ENCODE measurements at regions of chr13 and their contacts with region 1.

Region 1: DNA sequence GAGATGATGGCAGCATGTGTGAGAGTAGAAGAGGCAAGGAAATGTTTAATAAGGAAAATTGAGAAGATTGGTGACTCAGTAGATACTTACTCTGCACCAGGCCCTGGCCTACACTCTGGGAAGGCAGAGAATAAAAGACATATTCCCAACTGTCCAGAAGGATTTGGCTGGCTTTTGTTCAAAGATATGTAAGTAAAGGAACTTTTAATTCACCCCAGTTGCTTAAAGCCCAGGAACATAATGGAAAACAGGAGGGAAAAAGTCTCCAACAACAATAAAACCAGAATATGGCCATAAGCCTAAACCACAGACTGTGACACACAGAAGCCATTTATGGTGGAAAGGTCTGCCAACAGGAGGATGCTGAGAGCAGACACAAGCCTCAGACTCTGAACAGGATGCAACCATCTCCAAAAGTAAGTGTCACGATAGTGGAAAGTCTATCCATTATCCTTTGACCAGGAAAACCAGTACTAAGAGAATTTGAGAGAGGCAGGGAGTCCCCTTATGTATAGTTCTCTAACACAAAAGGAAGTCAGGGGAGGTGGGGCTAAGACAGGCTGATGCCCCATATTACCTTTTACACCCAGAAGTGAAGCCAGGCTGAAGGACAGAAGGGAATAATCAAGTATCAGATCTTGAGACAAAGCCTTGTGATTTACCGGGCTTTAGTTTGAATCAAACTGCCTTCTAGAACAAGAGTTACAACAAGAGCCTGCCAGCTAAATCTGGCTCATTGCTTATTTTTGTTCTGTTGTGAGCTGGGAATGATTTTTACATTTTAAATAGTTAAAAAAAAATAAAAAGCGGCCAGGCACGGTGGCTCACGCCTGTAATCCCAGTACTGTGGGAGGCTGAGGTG is 169.5 kb upstream of the STARD13 start:
- DNase-seq: peak; percentile 65
- H3K4me3 ChIP-seq: no peak overlapping the region
- CTCF ChIP-seq: no peak

Region 2: DNA sequence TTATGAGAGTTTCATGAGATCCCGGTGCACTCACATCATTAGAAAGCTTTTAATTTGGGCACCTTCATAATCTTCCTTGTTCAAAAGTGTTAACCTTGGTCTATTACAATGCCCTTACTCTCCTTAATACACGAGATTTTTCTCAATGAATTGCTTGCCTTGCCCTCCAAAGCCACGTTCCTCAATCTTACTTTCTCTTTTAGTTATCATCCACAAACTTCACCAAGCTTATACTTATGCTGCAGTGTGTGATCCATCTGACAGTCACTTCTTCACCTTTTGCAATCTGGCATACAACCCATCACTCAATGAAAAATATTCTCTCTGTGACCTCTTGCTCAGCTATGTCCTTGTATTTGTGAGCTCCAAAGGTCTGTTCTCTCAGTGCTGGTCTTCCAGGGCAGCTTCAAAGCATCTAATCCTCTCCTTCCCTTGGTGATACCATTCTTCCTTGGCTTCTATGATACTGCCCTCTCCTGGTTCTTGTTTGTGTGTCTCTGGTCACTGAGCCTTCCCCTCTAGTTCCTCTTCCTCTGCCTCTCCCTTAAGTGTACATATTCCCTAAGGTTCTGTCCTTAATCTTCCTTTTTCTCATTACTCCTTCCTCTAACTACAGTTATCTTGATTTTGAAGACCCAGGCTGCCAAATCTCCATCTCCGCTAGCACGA is 32.6 kb after region 1 on chr13:
- in situ Hi-C with region 1: loop called (anchors 5 kb)
- DNase-seq: no peak
- H3K4me3 ChIP-seq: no peak overlapping the region
- CTCF ChIP-seq: no peak

Region 3: GRCh38 chr13:33690354-33690753 is 235.3 kb after region 1 on chr13:
- in situ Hi-C with region 1: no loop called
- DNase-seq: no peak
- H3K4me3 ChIP-seq: no peak overlapping the region
- CTCF ChIP-seq: no peak

Region 4: GRCh38 chr13:33707449-33707848 is 252.4 kb after region 1 on chr13:
- in situ Hi-C with region 1: no loop called
- DNase-seq: no peak
- H3K4me3 ChIP-seq: no peak overlapping the region
- CTCF ChIP-seq: no peak